Caco-2 (cell line): ENCODE measurements at regions of chr17 and their contacts with region 1.

Region 1: DNA sequence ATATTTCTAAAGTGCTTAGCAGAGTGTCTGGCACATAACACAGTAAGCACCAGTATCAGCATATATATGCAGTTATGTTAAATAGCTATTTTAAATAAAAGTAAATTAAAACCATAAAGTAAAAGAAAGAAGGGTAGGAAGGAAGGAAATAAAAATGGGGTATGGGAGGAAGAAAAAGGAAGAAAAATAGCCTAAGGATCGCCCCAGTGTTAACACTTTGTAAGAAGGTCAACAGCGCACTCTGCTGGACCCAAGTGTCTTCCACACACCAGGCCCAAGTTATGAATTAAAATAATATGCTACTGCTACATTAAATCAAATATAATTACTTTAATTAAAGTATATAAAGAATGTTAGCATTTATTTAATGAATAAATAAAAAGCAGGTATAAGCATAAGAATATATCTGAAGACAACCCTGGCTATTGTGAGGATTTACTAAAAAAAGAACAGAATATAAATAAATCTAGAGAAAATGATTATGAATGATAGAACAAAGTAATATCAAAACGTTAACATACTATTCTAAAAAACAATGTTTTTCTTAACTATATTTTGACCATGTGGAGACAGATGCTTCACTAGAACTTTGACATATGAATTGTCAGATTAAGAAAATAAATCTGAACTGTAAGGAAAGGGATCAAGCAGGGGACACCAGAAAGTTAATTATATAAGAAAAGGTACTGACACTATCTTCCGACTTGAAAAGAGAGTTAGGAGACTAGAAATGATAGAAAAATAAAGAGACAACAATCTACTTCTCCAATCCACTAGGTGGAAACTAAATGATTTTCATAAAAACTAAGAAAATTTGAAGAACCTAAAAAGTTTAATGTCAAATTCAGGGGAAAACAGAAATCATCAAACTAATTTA is 25.9 kb downstream of the BRIP1 start:
- DNase-seq: peak; percentile 51 to 59
- H3K4me3 ChIP-seq: no peak overlapping the region
- H3K4me3 Mint-ChIP-seq: no peak overlapping the region
- H3K27ac Mint-ChIP-seq: no peak overlapping the region
- H3K4me1 ChIP-seq: peaks cover 4% of the 10 kb centered on the region; the same call in 1 of the 2 replicates
- H3K4me1 Mint-ChIP-seq: no peaks in the 10 kb centered on the region
- H3K27me3 ChIP-seq: no peaks in the 10 kb centered on the region
- H3K27me3 Mint-ChIP-seq: no peaks in the 10 kb centered on the region
- CTCF ChIP-seq: peak; percentile 88 to 90

Region 2: DNA sequence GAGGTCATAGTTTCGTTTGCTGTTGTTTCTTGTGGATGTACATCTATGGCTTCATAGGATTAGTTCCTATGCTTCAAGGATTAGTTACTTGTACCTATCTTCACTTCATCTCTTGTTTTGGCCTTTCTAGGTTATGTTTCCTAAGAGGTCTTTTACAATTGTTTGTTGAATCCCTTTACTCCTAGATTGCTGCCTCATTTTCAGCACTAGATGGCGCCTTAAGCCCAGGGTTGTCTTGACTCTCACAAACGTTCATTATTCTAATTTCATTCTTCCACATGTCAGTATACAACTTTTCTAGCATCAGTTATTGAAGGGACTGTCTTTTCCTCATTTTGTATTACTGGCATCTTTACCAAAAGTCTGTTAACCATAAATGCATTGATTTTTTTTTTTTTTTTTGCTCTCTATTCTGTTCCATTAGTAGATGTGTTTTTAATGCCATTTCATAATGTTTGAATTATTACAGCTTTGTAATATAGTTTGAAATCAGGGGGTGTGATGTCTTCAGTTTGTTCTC is 201.4 kb before region 1 on chr17:
- CTCF ChIA-PET with region 1: no interaction called
- POLR2A ChIA-PET with region 1: no interaction called
- intact Hi-C with region 1: loop called (anchors 1 kb)
- DNase-seq: peak; percentile 55 to 67
- H3K4me3 ChIP-seq: no peak overlapping the region
- H3K4me3 Mint-ChIP-seq: no peak overlapping the region
- H3K27ac Mint-ChIP-seq: no peak overlapping the region
- H3K4me1 ChIP-seq: no peaks in the 10 kb centered on the region
- H3K4me1 Mint-ChIP-seq: no peaks in the 10 kb centered on the region
- H3K27me3 ChIP-seq: no peaks in the 10 kb centered on the region
- H3K27me3 Mint-ChIP-seq: peaks cover 29% of the 10 kb centered on the region
- CTCF ChIP-seq: peak; percentile 82 to 86

Region 3: DNA sequence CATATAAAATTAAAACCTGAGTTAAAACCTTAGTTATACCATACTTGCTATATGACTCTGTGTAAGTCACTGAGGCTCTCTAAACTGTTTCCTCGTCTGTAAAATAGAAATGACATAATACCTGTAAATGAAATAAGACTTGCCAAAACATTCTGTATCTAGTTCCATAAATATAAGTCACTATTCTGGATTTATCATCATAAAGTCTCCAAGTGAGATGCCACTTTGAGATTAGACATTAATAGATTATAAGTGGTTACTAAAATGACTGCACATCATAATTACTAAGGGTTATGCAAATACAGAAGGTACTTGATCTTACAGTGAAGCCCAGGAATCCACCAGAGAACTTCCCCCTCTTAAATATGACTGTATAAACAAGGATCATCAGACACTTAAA is 37.9 kb after region 1 on chr17:
- CTCF ChIA-PET with region 1: no interaction called
- POLR2A ChIA-PET with region 1: no interaction called
- intact Hi-C with region 1: no loop called
- DNase-seq: no peak
- H3K4me3 ChIP-seq: no peak overlapping the region
- H3K4me3 Mint-ChIP-seq: no peak overlapping the region
- H3K27ac Mint-ChIP-seq: no peak overlapping the region
- H3K4me1 ChIP-seq: no peaks in the 10 kb centered on the region
- H3K4me1 Mint-ChIP-seq: peaks cover 10% of the 10 kb centered on the region
- H3K27me3 ChIP-seq: no peaks in the 10 kb centered on the region
- H3K27me3 Mint-ChIP-seq: no peaks in the 10 kb centered on the region
- CTCF ChIP-seq: no peak